ENCODE measurements at regions of chr2 and their contacts with region 1.

Region 1: GRCh38 chr2:119301413-119301812 is 65.2 kb downstream of the C2orf76 start:
- DNase-seq: peak; percentile 76
- H3K4me3 ChIP-seq: no peak overlapping the region
- H3K27ac ChIP-seq: no peak overlapping the region
- H3K4me1 ChIP-seq: peaks cover 38% of the 10 kb centered on the region
- H3K27me3 ChIP-seq: no peaks in the 10 kb centered on the region
- CTCF ChIP-seq: no peak

Region 2: DNA sequence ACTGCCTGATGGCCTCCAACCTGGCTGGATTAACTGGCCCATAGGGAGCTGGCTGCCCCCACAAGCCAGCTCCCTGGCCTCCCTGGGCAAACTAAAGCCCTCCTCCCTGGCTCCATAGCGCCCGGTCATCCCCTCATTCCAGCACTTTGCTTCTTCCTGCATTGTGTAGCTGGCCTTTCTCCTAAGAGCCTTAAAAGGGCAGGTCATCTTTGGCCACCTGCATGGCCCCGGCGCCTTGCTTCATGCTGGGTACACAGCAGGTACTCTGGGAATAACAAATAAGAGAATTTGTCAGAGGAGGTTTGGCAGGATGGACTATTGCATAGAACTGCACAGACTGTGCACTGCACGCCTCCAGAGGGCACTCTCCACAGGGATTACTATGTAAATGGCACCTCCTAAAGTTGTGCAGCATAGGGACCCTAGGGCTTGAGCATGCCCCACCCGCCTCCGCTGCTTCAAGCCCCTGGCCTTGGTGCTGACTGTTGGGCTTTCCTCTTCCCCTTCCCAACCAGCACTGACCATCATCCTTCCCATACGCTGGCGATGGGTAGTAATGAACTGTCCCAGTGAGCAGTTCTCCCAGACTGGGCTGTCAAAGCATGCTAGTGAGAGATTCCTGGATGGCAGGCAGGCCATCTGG is 66.9 kb before region 1 on chr2:
- CTCF ChIA-PET with region 1: no interaction called
- POLR2A ChIA-PET with region 1: no interaction called
- intact Hi-C with region 1: loop called (anchors 5 kb)
- DNase-seq: peak; percentile 67
- H3K4me3 ChIP-seq: no peak overlapping the region
- H3K27ac ChIP-seq: no peak overlapping the region
- H3K4me1 ChIP-seq: peaks cover 32% of the 10 kb centered on the region
- H3K27me3 ChIP-seq: no peaks in the 10 kb centered on the region
- CTCF ChIP-seq: peak; percentile 68

Measured in A673 (cell line).